Activated CD4-positive, alpha-beta T cell treated with anti-CD3 and anti-CD28 coated beads for 36 hours (primary cell): ENCODE measurements at regions of chr19 and their contacts with region 1.

Region 1: GRCh38 chr19:344625-345319 is at the start of gene MIER2:
- DNase-seq: peak; percentile 94
- ATAC-seq: peak; percentile 94
- H3K4me3 Mint-ChIP-seq: peak within 1 kb of the TSS; percentile 79
- H3K27ac Mint-ChIP-seq: peak within 1 kb of the TSS; percentile 77
- H3K4me1 Mint-ChIP-seq: peaks cover 44% of the 10 kb centered on the region
- H3K27me3 Mint-ChIP-seq: peaks cover 7% of the 10 kb centered on the region
- total RNA-seq, gene MIER2: 21.2 to 24.6 TPM

Region 2: DNA sequence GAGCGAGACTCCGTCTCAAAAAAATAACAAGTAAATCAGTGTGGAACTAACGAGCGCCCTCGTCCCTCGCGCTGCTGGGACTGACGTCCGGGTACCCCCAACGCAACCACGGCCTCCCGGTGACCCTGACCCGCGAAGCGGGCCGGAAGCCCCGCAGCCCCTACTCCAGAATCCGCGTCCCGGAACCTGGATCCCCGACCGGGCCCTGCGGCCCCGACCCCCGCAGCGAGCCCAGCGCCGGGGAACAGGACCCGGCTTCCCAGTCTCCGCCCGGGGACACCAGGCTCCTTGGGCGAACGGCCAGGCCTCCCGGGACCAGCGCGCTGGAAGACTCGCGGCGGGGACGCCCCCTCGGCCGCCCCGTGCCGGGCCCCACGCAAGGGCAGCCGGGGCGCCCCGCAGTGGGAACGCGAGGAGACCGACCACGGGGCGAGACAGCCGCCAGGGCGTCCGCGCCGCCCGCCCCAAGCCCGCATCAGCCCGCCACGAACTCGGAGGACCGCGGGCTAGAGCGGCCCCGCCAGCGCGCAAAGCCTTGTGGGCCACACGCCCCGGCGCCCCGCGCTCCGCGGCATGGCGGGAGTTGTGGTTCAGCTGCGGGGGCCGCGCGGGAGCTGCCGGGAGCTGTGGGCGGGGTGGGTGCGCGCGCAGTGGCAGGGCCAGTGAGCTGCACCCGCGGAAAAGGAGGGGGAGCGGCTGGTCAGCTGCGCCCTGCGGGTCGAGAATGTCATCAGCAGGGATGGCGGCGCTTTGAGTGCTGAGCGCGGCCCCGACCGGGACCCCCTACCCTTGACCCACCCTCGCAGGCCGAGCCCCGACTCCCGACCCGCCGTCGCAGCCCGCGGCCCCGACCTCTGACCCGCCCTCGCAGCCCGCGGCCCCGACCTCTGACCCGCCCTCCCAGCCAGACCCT is 144.0 kb after region 1 on chr19:
- CTCF ChIA-PET with region 1: no interaction called
- POLR2A ChIA-PET with region 1: no interaction called
- intact Hi-C with region 1: loop called in 1 of 2 experiments (anchors 1 kb)
- DNase-seq: peak; percentile 93
- ATAC-seq: peak; percentile 91
- H3K4me3 Mint-ChIP-seq: peak overlapping the region; percentile 71
- H3K27ac Mint-ChIP-seq: peak overlapping the region; percentile 75
- H3K4me1 Mint-ChIP-seq: peaks cover 2% of the 10 kb centered on the region
- H3K27me3 Mint-ChIP-seq: peaks cover 10% of the 10 kb centered on the region